ENCODE measurements at regions of chr17 and their contacts with region 1.

Region 1: GRCh38 chr17:17641621-17642409 is 39.4 kb upstream of the RAI1 start:
- DNase-seq: peak; percentile 46
- ATAC-seq: peak; percentile 98
- H3K4me3 ChIP-seq: no peak overlapping the region
- H3K27ac ChIP-seq: no peak overlapping the region
- H3K4me1 ChIP-seq: no peaks in the 10 kb centered on the region
- H3K27me3 ChIP-seq: no peaks in the 10 kb centered on the region
- CTCF ChIP-seq: peak; percentile 79 to 98 (median 94); a peak in 5 of 6 replicates
- EP300 ChIP-seq: no peak
- POLR2A ChIP-seq: no peak
- RAD21 ChIP-seq: peak; percentile 99

Region 2: DNA sequence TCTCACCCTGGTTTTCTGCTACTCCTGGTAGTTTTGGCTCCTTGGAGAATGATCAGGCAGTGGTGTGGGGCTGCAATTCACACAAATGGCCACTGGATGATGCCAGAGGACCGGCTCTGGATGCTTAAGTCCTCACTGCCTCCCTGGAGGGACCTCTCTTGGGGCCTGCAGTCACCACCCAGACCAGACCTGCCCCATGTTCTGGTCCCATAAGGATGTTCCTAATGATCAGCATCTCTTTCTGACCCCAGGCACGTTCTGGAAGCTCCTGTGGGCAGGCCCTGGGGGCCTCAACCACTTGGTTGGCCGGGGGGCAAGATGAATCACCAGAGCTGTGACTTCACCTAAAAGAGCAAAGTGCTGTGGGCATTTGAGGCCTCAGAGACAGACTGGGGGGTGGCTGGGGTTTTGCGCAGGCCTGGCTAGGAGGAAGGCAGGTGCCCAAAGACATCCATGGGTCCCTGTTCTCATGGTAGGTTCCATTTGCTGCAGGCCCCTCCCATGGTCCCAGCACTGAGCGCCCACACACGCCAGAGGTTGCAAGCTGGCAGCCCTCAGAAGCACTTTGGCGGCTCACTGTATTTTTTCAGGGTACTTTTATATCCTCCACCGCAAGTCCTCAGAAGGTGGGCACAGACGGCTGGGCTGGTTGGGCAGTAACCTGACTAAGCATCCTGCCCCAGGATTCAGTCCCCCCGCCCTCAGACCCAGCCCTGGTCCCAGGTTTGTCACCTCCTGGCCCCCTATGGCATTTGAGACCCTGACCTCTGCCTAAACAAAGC is 285.5 kb before region 1 on chr17:
- CTCF ChIA-PET with region 1: interaction called, 44 read pairs
- POLR2A ChIA-PET with region 1: no interaction called
- RAD21 ChIA-PET with region 1: interaction called, 27 read pairs
- SMC1A ChIA-PET with region 1: interaction called, 27 read pairs
- in situ Hi-C with region 1: loop called (anchors 5 kb)
- intact Hi-C with region 1: loop called (anchors 1 kb)
- DNase-seq: peak; percentile 2
- ATAC-seq: peak; percentile 92
- H3K4me3 ChIP-seq: no peak overlapping the region
- H3K27ac ChIP-seq: no peak overlapping the region
- H3K4me1 ChIP-seq: no peaks in the 10 kb centered on the region
- H3K27me3 ChIP-seq: no peaks in the 10 kb centered on the region
- CTCF ChIP-seq: peak; percentile 99 to 100 (median 100)
- EP300 ChIP-seq: no peak
- POLR2A ChIP-seq: no peak
- RAD21 ChIP-seq: peak; percentile 98

Region 3: GRCh38 chr17:17511881-17512858 is 129.6 kb before region 1 on chr17:
- CTCF ChIA-PET with region 1: no interaction called
- POLR2A ChIA-PET with region 1: no interaction called
- RAD21 ChIA-PET with region 1: no interaction called
- SMC1A ChIA-PET with region 1: no interaction called
- in situ Hi-C with region 1: no loop called
- intact Hi-C with region 1: no loop called
- DNase-seq: no peak
- ATAC-seq: no peak
- H3K4me3 ChIP-seq: no peak overlapping the region
- H3K27ac ChIP-seq: no peak overlapping the region
- H3K4me1 ChIP-seq: no peaks in the 10 kb centered on the region
- H3K27me3 ChIP-seq: no peaks in the 10 kb centered on the region
- CTCF ChIP-seq: no peak
- EP300 ChIP-seq: no peak
- POLR2A ChIP-seq: no peak
- RAD21 ChIP-seq: no peak

Region 4: DNA sequence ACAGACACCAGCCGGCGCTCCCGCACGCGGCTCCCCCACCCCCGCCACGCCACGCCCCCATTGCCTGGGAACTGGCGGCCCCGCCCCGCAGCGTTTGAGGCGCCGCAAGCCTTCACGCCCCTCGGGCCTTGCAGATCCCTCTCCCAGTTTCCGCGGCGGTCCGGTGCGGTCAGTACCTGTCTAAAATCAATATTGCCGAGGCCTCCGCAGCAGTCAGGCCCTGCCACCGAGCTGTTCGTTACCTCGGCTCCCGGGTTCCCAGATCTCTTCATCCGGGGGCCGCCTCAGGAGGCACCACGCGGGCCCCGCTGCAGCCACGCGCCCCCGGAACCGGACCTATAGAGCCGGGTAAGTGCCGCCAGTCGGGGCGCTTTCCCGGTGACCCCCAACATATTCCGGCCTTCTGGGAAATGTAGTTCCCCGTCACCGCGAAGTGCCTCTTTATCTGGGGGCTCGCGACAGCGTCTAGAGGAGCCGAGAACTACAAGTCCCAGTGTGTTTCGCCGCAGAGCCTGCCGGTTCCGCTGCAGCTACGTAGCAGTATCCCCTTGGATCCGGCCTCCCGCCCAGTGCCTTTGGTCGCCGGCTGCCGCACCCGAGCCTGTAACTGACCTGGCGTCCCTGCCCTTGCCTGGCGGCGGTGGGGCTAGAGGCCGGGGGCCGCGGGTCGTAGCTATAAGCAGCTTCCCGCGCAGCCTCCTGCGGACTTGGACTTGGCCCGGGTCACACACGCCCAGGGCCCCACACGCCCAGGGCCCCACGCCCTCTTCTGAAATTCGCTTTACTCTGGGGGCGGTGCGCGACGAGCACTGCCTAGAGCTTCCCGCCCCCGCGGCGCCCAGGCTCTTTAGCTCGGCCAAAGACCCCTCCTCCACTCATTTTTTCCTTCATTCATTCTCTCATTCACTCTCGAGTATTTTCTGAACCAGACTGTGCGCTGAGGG is 50.2 kb before region 1 on chr17 and contains the start of gene PEMT:
- CTCF ChIA-PET with region 1: interaction called, 3 read pairs
- POLR2A ChIA-PET with region 1: no interaction called
- RAD21 ChIA-PET with region 1: no interaction called
- SMC1A ChIA-PET with region 1: interaction called, 4 read pairs
- in situ Hi-C with region 1: loop called (anchors 5 kb)
- intact Hi-C with region 1: no loop called
- DNase-seq: peak; percentile 88
- ATAC-seq: peak; percentile 98
- H3K4me3 ChIP-seq: peak within 1 kb of the TSS; percentile 98
- H3K27ac ChIP-seq: peak within 1 kb of the TSS; percentile 66
- H3K4me1 ChIP-seq: peaks cover 7% of the 10 kb centered on the region
- H3K27me3 ChIP-seq: no peaks in the 10 kb centered on the region
- CTCF ChIP-seq: no peak
- EP300 ChIP-seq: no peak
- POLR2A ChIP-seq: peak; percentile 91
- RAD21 ChIP-seq: no peak
- polyA plus RNA-seq, gene PEMT: 2.8 to 6.8 TPM

Region 5: GRCh38 chr17:17663160-17664063 is 21.6 kb after region 1 on chr17:
- CTCF ChIA-PET with region 1: interaction called, 11 read pairs
- POLR2A ChIA-PET with region 1: no interaction called
- RAD21 ChIA-PET with region 1: interaction called, 3 read pairs
- SMC1A ChIA-PET with region 1: no interaction called
- in situ Hi-C with region 1: no loop called
- intact Hi-C with region 1: no loop called
- DNase-seq: peak; percentile 70
- ATAC-seq: peak; percentile 95
- H3K4me3 ChIP-seq: peak overlapping the region; percentile 18; the same call in 1 of the 2 replicates
- H3K27ac ChIP-seq: peak overlapping the region; percentile 35
- H3K4me1 ChIP-seq: peaks cover 28% of the 10 kb centered on the region
- H3K27me3 ChIP-seq: no peaks in the 10 kb centered on the region; a peak in 1 of 4 replicates
- CTCF ChIP-seq: no peak
- EP300 ChIP-seq: no peak
- POLR2A ChIP-seq: peak; percentile 67
- RAD21 ChIP-seq: no peak

Measured in GM12878 (cell line).